ENCODE measurements at regions of chr12 and their contacts with region 1.

Region 1: DNA sequence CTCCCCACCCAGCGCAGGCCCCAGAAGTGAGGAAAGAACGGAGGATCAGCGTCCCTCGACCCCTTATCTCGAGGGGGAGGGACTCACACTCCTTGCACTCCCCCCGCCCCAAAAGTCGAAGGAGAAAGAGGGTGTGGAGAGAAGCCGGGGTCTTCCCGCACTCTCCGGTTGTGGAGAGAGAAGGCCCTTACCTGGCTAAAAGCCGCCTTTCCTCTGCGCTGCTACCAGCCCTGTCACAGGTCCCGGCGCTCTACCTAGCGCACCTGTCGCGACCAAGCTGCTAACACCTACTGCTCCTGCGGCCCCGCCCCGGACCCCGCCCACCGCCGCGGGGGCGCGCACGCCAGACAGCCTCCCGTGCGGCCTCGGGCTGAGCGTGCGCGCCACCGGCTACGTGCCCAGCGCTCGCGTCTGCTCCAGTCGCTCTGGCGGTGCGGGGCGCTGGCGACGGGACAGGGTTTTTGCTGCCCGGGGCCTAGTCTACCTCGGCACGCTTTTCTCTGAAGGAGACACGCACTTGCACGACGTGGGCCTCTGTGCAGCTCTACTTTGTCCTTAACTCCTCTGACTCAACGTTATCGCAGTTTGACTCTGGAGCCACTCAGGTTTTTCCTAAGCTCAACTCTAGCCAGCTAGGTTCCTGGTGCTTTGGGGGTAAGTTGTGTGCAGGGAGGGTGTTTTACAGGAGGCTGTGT is at the start of gene LIMA1:
- DNase-seq: peak; percentile 92
- H3K4me3 Mint-ChIP-seq: peak within 1 kb of the TSS; percentile 90
- H3K27ac Mint-ChIP-seq: peak within 1 kb of the TSS; percentile 72
- H3K4me1 Mint-ChIP-seq: peaks cover 13% of the 10 kb centered on the region
- H3K27me3 Mint-ChIP-seq: no peaks in the 10 kb centered on the region
- total RNA-seq, gene LIMA1: 15.9 to 16.5 TPM

Region 2: DNA sequence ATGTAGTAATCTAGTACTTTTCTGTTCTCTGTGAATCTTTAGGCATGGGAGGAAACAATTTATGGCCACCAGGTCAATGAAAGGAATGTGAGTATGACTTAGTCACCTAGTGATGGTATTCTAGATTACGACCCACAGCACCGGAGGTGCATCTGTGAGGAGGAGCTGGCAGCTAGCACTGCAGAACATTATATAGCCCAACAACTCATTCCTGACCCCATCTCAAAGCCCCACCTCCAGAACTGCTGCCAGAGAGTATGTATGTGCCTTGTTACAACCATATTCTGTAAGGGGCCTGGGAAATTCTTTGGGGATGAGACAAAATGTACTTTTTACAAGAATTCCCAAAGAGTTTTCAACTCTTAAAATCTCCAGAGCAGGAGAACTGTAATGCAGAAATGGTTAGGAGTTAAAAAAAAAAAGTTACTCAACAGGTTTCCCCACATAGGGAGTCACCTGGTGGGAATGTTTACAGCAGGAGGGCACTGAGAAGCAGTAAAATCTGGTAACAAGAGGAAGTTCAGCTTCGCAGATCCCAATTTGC is 81.3 kb before region 1 on chr12:
- CTCF ChIA-PET with region 1: no interaction called
- intact Hi-C with region 1: no loop called
- DNase-seq: no peak
- H3K4me3 Mint-ChIP-seq: no peak overlapping the region
- H3K27ac Mint-ChIP-seq: no peak overlapping the region
- H3K4me1 Mint-ChIP-seq: no peaks in the 10 kb centered on the region
- H3K27me3 Mint-ChIP-seq: no peaks in the 10 kb centered on the region

Region 3: GRCh38 chr12:50246873-50247612 is 36.3 kb before region 1 on chr12:
- CTCF ChIA-PET with region 1: no interaction called
- intact Hi-C with region 1: loop called (anchors 5 kb)
- DNase-seq: peak; percentile 56
- H3K4me3 Mint-ChIP-seq: no peak overlapping the region
- H3K27ac Mint-ChIP-seq: peak overlapping the region; percentile 68
- H3K4me1 Mint-ChIP-seq: peaks cover 11% of the 10 kb centered on the region
- H3K27me3 Mint-ChIP-seq: no peaks in the 10 kb centered on the region

Region 4: GRCh38 chr12:50400598-50401364 is 117.4 kb after region 1 on chr12 and contains the start of gene LARP4:
- CTCF ChIA-PET with region 1: no interaction called
- intact Hi-C with region 1: loop called (anchors 2 kb)
- DNase-seq: peak; percentile 94
- H3K4me3 Mint-ChIP-seq: peak within 1 kb of the TSS; percentile 99
- H3K27ac Mint-ChIP-seq: peak within 1 kb of the TSS; percentile 87
- H3K4me1 Mint-ChIP-seq: peaks cover 19% of the 10 kb centered on the region
- H3K27me3 Mint-ChIP-seq: peaks cover 2% of the 10 kb centered on the region
- total RNA-seq, gene LARP4: 44.7 to 44.9 TPM

Measured in activated naive CD4-positive, alpha-beta T cell treated with anti-CD3 and anti-CD28 coated beads for 36 hours (primary cell).